ENCODE measurements at regions of chr10 and their contacts with region 1.

Region 1: DNA sequence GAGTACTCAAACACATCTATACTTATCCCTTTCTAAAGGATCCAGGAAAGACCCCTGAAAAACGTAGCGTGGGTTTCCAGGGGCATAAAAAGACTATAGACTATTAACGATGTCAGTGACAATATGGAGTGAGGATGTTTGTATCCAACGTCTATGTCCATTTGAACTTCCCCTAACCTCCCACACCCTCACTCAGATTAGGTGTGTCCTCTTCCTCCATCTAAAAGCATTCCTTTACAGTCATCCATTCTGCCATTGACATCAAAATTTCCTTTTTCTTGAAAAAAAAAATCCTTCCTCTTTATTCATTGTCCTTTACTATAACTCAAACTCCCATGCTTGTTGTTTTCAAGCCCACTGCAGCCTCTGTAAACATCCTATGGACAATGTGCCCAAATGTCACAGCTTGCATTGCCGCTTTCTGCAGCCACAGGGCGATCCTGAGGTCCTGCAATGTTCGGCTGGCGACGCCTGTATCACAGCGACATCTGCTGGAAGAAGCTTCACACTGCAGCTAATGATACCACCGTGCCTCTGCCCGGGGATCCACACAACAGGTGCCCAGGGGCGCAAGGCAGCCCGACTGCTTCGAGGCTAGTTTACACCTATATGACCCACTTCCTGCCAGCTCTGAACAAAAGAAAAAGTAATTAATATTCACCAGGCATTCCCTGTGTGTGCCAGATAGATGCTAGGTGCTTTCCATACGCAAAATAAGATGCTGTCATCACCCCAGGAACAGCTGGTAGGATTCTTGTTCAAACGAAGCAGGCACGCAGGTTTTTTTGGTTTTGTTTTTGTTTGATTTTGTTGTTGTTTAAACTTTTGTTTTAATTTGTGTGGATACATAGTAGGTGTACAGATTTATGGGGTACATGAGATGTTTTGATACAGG is 267.9 kb upstream of the GHITM start:
- DNase-seq: peak; percentile 69
- H3K4me3 Mint-ChIP-seq: no peak overlapping the region
- H3K27ac Mint-ChIP-seq: no peak overlapping the region
- H3K4me1 Mint-ChIP-seq: no peaks in the 10 kb centered on the region
- H3K27me3 Mint-ChIP-seq: no peaks in the 10 kb centered on the region

Region 2: DNA sequence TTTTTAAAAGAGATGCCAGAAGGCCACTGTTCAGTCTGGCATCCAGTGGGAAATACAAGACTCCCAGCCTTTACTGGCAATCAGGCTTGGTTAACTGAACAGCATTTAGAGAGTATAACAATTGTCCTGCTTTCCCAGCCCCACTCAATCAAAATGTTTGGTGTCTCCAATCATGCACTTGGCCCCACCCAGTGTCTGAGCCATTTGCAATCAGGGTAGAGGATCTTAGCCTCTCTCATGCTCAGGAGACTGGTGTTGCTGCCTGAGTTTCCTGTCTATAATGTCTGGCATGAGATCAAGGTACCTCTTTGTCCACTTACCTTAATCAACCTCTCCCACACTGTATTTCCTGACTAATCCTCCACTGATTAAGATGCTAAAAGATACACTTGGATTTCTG is 22.3 kb before region 1 on chr10:
- CTCF ChIA-PET with region 1: no interaction called
- POLR2A ChIA-PET with region 1: no interaction called
- DNase-seq: no peak
- H3K4me3 Mint-ChIP-seq: no peak overlapping the region
- H3K27ac Mint-ChIP-seq: no peak overlapping the region
- H3K4me1 Mint-ChIP-seq: no peaks in the 10 kb centered on the region
- H3K27me3 Mint-ChIP-seq: no peaks in the 10 kb centered on the region

Region 3: GRCh38 chr10:83886871-83887270 is 15.4 kb after region 1 on chr10:
- CTCF ChIA-PET with region 1: interaction called, 15 read pairs
- POLR2A ChIA-PET with region 1: no interaction called
- DNase-seq: no peak
- H3K4me3 Mint-ChIP-seq: no peak overlapping the region
- H3K27ac Mint-ChIP-seq: no peak overlapping the region
- H3K4me1 Mint-ChIP-seq: no peaks in the 10 kb centered on the region
- H3K27me3 Mint-ChIP-seq: peaks cover 3% of the 10 kb centered on the region